Breast epithelium (tissue), 4 donors: ENCODE measurements at regions of chr9 and their contacts with region 1.

Region 1: GRCh38 chr9:101530077-101530711 is 3.5 kb upstream of the RNF20 start:
- DNase-seq: peak; percentile 54 to 62
- H3K4me3 ChIP-seq: no peak overlapping the region
- H3K27ac ChIP-seq: no peak overlapping the region
- H3K4me1 ChIP-seq: no peaks in the 10 kb centered on the region
- H3K27me3 ChIP-seq: no peaks in the 10 kb centered on the region
- CTCF ChIP-seq: peak; percentile 59 to 75 (median 75)
- POLR2A ChIP-seq: no peak

Region 2: GRCh38 chr9:99868845-99869244 is 1661.3 kb before region 1 on chr9:
- intact Hi-C with region 1: no loop called
- DNase-seq: no peak
- H3K4me3 ChIP-seq: no peak overlapping the region
- H3K27ac ChIP-seq: no peak overlapping the region
- H3K4me1 ChIP-seq: no peaks in the 10 kb centered on the region
- H3K27me3 ChIP-seq: no peaks in the 10 kb centered on the region
- CTCF ChIP-seq: no peak
- POLR2A ChIP-seq: no peak

Region 3: GRCh38 chr9:100394816-100395215 is 1135.4 kb before region 1 on chr9:
- intact Hi-C with region 1: loop called (anchors 10 kb)
- DNase-seq: no peak
- H3K4me3 ChIP-seq: no peak overlapping the region
- H3K27ac ChIP-seq: no peak overlapping the region
- H3K4me1 ChIP-seq: no peaks in the 10 kb centered on the region
- H3K27me3 ChIP-seq: no peaks in the 10 kb centered on the region
- CTCF ChIP-seq: no peak
- POLR2A ChIP-seq: no peak

Region 4: GRCh38 chr9:101449140-101449721 is 81.0 kb before region 1 on chr9:
- intact Hi-C with region 1: loop called (anchors 5 kb)
- DNase-seq: peak; percentile 56 to 75
- H3K4me3 ChIP-seq: peak overlapping the region; percentile 46 to 73 (median 59)
- H3K27ac ChIP-seq: peak overlapping the region; percentile 35 to 36
- H3K4me1 ChIP-seq: no peaks in the 10 kb centered on the region
- H3K27me3 ChIP-seq: no peaks in the 10 kb centered on the region
- CTCF ChIP-seq: peak in 2 of 3 donors; percentile 43 to 50
- POLR2A ChIP-seq: no peak